Left ventricle myocardium inferior (tissue), 1 donor: ENCODE measurements at regions of chr14 and their contacts with region 1.

Region 1: GRCh38 chr14:91173221-91173670 is 59.4 kb downstream of the DGLUCY start:
- DNase-seq: peak; percentile 80
- H3K4me3 ChIP-seq: no peak overlapping the region
- H3K27ac ChIP-seq: peak overlapping the region; percentile 82
- H3K4me1 ChIP-seq: peaks cover 59% of the 10 kb centered on the region
- H3K27me3 ChIP-seq: no peaks in the 10 kb centered on the region
- CTCF ChIP-seq: peak; percentile 92

Region 2: DNA sequence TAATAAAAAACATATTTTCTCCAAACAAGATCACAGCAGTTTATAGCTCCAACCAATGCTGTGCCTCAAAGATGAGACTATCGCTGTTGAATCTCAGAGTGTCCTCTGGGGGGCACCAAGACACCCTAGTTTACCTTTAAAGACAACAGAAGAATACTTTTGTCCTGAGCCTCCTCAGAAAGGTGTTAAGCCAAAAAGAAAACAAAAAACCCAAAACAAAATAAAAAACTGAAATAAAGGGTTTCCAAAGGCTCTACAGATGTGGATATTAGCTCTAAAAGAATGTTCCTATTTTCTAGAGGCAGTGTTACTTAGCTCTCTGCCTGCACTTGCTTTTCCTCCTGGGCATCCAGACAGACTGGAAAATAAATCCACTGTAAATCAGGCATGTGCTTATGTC is 270.1 kb before region 1 on chr14:
- intact Hi-C with region 1: loop called (anchors 2 kb)
- DNase-seq: no peak
- H3K4me3 ChIP-seq: no peak overlapping the region
- H3K27ac ChIP-seq: no peak overlapping the region
- H3K4me1 ChIP-seq: no peaks in the 10 kb centered on the region
- H3K27me3 ChIP-seq: no peaks in the 10 kb centered on the region
- CTCF ChIP-seq: peak; percentile 81